GM10248 (cell line): ENCODE measurements at regions of chr16 and their contacts with region 1.

Region 1: DNA sequence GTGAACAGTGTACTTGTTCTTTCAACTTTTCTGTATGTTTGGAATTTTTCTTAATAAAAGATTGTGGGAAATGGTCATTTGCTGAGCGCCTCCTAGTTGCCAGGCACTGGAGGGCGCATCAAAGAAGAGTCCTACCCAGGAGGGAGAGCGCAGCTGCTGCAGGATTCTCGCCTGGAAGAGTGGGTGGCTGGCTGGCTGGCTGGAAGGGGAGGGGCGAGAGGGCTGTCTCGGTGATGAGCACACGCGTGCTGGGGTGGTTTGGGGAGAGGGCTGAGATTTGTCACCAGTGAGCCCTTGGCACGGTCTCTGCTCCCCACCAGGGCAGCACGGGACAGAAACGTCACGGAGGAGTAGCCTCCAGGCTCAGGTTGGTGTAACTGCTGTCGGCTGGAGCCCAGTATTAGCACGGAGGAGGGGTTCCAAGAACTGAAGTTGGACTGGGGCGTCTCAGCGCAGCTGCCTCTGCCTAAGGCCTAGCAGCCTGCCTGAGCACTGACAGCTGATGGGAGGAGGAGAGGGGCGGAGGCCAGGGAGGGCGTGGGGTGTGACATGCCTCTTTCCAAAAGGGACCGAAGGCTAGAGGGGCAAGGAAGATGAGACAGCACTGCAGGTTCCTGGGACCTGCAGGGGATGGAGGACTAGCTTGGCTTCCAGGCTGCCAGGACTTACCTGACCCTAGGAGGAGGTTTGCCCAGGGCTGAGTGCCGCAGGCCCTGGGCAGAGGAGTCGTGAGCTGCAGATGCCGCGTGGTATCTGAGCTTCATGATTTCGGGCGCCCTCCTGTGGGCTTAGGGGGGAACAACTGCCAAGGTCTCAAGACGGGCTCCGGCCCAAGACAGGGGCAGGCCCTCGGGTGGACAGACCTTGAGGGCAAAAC is 5.7 kb downstream of the LDHD start:
- DNase-seq: peak; percentile 92
- CTCF ChIP-seq: peak; percentile 93

Region 2: GRCh38 chr16:74813109-74813641 is 297.7 kb before region 1 on chr16:
- CTCF ChIA-PET with region 1: interaction called, 24 read pairs
- POLR2A ChIA-PET with region 1: no interaction called
- DNase-seq: peak; percentile 90
- CTCF ChIP-seq: peak; percentile 90

Region 3: GRCh38 chr16:74942977-74943918 is 167.6 kb before region 1 on chr16:
- CTCF ChIA-PET with region 1: interaction called, 10 read pairs
- POLR2A ChIA-PET with region 1: no interaction called
- DNase-seq: no peak
- CTCF ChIP-seq: no peak

Region 4: DNA sequence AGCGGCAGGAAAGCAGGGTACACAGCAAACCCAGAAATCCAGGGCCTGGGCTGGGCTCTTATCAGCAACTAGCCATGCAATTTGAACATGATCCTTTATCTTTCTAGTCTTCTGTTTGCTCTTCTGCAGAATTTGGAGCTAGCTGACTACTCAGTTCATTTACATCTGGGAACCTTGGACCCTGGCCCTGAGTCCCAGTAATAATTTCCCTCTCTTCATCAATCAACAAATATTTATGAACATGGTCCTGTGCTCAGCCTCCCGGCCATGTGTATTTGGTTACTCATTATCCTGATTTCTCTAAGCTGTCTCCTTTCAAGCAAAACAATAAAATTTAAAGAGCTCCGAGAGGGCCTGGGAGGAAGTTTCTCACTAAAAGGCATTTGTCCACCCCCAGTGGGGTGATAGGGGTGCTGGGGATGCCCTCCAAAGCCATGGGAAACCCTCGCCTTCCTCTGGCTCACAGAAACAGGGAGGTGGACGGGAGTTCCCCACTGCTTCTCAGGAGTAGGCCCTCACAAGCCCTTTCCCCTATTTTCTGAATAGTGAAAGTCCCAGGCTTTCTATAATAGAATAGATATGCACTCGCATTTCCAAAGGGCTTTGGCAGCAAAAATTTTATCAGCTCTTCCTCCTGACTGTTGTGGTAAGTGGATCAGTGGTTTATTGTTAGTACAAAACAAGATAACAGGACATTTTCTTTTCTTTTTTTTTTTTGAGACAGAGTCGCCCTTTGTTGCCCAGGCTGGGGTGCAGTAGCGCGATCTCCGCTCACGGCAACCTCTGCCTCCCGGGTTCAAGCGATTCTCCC is 119.1 kb before region 1 on chr16:
- CTCF ChIA-PET with region 1: interaction called, 108 read pairs
- POLR2A ChIA-PET with region 1: no interaction called
- DNase-seq: no peak
- CTCF ChIP-seq: no peak

Region 5: DNA sequence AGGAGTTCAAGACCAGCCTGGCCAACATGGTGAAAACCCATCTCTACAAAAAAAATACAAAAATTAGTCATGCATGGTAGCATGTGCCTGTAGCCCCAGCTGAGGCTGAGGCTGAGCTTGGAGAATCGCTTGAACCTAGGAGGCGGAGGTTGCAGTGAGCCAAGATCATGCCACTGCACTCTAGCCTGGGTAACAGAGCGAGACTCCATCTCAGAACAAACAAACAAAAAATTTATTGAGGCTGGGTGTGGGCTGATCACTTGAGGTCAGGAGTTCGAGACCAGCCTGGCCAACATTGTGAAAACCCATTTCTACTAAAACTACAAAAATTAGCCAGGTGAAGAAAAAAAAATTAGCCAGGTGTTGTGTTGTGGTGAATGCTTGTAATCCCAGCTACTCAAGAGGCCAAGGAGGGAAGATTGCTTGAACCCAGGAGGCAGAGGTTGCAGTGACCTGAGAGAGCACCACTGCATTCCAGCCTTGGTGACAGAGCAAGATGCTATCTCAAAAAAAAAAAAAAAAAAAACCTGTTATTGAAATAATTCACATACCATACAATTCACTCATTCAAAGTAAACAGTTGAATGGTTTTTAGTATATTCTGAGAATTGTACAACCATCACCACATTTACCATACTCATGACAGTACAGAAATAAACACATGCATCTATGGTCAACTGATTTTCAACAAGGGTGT is 81.2 kb before region 1 on chr16:
- CTCF ChIA-PET with region 1: interaction called, 10 read pairs
- POLR2A ChIA-PET with region 1: no interaction called
- DNase-seq: no peak
- CTCF ChIP-seq: no peak

Region 6: DNA sequence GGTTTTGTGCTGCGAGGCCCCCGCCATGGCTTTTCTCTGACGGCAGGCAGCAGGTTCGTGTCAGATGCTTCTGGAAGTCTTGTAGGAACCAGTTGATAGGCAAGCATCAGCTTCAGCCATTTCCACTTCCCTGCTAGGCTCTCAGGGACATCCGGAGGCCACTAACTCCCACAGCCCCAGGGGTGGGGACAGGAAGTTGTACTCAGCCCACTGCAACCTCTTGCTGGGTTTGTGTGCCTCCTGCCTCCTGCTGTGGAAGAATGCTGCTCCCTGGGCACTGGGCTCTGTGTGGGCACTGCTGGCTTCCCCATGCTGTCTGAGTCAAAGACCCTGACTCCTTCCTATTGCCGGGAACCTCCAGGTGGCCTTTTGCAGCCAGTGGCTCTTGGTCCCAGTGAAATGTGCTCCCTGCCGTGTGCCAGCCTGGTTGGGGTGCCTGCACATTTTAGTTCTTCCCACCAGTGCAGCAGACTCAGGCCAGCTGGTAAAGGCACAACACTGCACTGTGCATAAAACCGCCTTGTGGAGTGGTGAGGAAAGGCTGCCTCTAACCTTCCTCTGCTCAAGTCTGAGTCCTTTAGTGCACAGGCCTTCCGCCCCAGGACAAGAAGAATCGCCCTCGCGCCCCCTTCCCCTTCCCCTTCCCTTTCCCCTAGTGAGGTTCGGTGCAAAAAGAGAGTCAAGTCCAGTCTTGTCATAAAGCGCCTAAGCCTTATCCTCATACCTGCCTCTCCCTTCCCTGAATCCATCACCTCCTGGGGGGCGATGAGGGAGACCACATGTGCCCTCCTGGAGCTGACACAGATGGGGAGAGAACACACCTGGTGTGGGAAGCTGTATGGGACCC is 10.9 kb before region 1 on chr16:
- CTCF ChIA-PET with region 1: interaction called, 33 read pairs
- POLR2A ChIA-PET with region 1: no interaction called
- DNase-seq: no peak
- CTCF ChIP-seq: peak; percentile 21

Region 7: GRCh38 chr16:75148311-75149195 is 37.7 kb after region 1 on chr16 and contains the start of gene ZFP1:
- CTCF ChIA-PET with region 1: interaction called, 13 read pairs
- POLR2A ChIA-PET with region 1: no interaction called
- DNase-seq: peak; percentile 94
- CTCF ChIP-seq: no peak